ENCODE measurements at regions of chr20 and their contacts with region 1.

Region 1: DNA sequence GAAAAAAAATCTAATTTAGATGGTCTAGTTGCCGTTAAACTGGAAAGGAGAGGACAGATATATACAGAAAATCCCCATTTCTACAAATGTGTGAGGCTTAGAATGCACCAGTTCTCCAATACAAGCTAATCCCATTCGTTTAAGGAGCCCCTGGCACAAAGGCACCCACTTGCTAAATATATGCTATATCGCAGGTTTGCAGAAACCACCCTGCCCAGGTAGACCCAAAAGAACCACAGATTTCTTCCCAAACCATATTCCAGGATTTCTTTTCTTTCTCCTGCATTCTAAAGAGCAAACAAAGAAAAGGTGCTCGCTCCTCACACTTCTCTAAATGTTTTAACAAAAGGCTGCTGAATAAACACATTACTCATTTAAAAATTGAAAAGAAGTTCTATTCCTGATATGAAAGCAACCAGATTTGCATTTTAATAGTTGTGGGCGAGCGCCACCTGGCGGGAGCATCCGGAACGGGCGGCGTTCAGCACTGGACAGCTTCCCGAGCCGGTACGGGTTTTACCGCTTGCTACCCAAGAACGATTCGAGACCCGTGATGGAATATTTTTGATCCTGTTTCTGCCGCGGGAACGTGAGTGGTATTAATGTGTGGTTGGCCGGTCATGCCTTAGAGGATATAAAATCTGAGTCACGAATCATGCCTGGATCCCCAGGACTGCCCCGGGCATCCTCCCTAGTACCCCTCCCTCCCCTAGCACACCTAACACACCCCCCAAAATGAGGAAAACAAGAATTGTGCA is 2.1 kb downstream of the PTPRT start:
- DNase-seq: peak; percentile 73
- ATAC-seq: no peak

Region 2: DNA sequence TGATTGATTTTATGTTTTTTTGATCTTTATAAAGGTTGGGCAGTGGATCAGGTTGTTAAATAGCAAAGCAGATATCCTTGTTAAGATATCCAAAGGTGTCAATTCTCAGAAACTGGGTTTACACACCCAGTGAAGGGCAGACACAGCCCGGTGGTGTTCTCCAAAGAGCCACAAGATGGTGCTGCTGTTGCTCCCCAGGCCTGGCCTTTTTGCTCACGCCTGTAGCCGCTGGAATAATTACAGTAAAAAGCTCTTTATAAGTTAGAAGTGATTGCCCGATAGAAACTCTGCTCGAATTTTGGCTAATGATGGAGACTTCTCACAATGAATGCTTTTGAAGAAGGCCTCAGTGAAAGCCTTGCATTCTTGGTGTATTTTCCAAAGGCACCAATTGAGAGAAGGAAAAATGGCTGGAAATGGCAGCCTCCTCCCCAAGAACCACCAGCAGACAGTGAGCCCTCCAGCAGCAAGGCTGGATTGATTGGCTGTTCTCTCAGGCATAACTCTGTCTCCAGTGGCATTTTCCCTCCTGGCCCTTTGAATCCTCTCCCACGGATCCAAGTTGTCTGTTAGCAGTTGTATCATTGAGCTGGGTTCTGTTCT is 1449.0 kb before region 1 on chr20:
- intact Hi-C with region 1: loop called (anchors 2 kb)
- DNase-seq: no peak
- ATAC-seq: peak; percentile 68

Measured in Right ventricle myocardium inferior (tissue), 1 donor.